Activated CD8-positive, alpha-beta memory T cell treated with anti-CD3 and anti-CD28 coated beads, Interleukin-2, amount 10 ng/mL, durations not matched to agents 7 days and 5 days (primary cell): ENCODE measurements at regions of chr4 and their contacts with region 1.

Region 1: DNA sequence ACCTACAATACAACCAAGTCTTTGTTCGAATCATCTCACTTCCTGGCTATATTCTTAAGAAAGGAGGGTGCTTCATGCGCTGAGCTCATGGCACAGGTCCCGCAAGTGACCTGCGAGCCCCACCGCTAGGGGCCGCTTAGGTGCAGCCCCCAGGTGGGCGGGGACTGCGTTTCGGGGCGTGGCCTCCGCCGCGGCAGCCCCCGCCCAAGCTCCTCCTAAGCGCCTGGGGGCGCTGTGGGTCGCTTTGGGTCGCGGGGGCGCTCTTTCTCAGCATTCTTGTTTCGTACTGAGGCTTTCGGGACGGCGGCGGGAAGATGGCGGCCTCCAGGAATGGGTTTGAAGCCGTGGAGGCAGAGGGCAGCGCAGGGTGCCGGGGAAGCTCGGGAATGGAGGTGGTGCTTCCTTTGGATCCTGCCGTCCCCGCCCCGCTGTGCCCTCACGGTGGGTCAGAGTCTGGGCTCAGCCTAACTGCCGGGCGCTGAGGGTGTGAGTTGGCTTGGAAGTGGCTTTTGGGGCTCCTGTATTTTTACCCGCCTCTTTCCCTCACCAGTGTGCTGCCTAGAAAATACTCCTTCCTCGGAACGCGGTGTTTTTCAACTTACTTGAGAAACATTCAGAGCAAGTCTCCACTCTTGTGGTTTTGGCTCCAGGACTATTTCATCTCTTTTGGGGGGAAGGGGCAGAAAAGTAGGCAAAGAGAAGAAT is at the start of gene ZCCHC4:
- DNase-seq: peak; percentile 91
- ATAC-seq: peak; percentile 98
- H3K4me3 Mint-ChIP-seq: peak within 1 kb of the TSS; percentile 98
- H3K27ac Mint-ChIP-seq: peak within 1 kb of the TSS; percentile 94
- H3K4me1 Mint-ChIP-seq: peaks cover 38% of the 10 kb centered on the region
- H3K27me3 Mint-ChIP-seq: no peaks in the 10 kb centered on the region
- total RNA-seq, gene ZCCHC4: 11.1 to 13.8 TPM

Region 2: GRCh38 chr4:25234390-25235370 is 78.0 kb before region 1 on chr4:
- CTCF ChIA-PET with region 1: interaction called, 26 read pairs
- DNase-seq: peak; percentile 63
- ATAC-seq: peak; percentile 42
- H3K4me3 Mint-ChIP-seq: peak overlapping the region; percentile 93
- H3K27ac Mint-ChIP-seq: peak overlapping the region; percentile 95
- H3K4me1 Mint-ChIP-seq: peaks cover 41% of the 10 kb centered on the region
- H3K27me3 Mint-ChIP-seq: no peaks in the 10 kb centered on the region

Region 3: DNA sequence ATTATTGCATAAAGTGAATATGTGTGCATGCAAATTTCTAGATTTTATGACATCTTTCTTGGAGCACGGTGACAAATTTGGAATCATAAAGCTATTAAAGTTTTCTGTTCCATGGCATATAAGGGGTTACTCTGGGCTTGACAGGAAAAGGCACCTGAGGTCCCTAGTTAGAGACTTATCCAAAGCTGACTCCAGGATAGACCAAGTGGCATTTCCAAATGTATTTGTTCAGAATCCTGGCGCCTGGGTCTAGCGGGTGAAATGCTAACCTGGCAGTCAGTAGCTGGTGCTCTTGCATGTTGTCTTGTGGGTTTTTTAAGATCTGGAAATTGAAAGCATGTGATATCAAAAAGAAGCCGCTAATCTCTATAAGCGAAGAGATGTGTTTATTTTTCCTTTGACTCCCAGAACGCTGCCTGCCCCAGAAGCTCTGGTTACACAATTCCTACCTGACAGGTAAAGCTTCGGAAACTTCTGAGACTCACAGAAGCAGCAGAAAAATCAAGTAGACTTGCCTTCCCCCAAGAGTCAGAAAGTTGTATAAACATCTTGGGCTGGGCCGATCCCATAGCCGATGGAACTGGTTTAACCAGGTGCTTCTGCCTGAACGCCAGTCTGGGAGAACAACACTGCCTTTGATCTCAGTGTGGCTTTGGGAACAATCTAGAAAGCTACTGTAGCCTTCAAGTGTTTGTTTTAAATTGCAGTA is 13.0 kb before region 1 on chr4:
- CTCF ChIA-PET with region 1: interaction called, 14 read pairs
- DNase-seq: no peak
- ATAC-seq: no peak
- H3K4me3 Mint-ChIP-seq: no peak overlapping the region
- H3K27ac Mint-ChIP-seq: no peak overlapping the region
- H3K4me1 Mint-ChIP-seq: no peaks in the 10 kb centered on the region
- H3K27me3 Mint-ChIP-seq: peaks cover 33% of the 10 kb centered on the region

Region 4: GRCh38 chr4:25367004-25367621 is 54.5 kb after region 1 on chr4:
- CTCF ChIA-PET with region 1: interaction called, 57 read pairs
- DNase-seq: no peak
- ATAC-seq: no peak
- H3K4me3 Mint-ChIP-seq: no peak overlapping the region
- H3K27ac Mint-ChIP-seq: no peak overlapping the region
- H3K4me1 Mint-ChIP-seq: no peaks in the 10 kb centered on the region
- H3K27me3 Mint-ChIP-seq: no peaks in the 10 kb centered on the region